ENCODE measurements at regions of chr2 and their contacts with region 1.

Region 1: GRCh38 chr2:190592831-190593230 is 56.1 kb upstream of the NAB1 start:
- DNase-seq: no peak
- CTCF ChIP-seq: no peak

Region 2: GRCh38 chr2:190607014-190607597 is 14.3 kb after region 1 on chr2:
- CTCF ChIA-PET with region 1: interaction called, 17 read pairs
- POLR2A ChIA-PET with region 1: no interaction called
- DNase-seq: no peak
- CTCF ChIP-seq: no peak